ENCODE measurements at regions of chr20 and their contacts with region 1.

Region 1: GRCh38 chr20:3825526-3825925 is 5.2 kb downstream of the AP5S1 start:
- DNase-seq: no peak
- H3K4me3 ChIP-seq: no peak overlapping the region
- H3K27ac ChIP-seq: no peak overlapping the region
- H3K4me1 ChIP-seq: peaks cover 0 to 8% of the 10 kb centered on the region in 2 donors
- H3K27me3 ChIP-seq: no peaks in the 10 kb centered on the region
- CTCF ChIP-seq: no peak
- POLR2A ChIP-seq: no peak

Region 2: DNA sequence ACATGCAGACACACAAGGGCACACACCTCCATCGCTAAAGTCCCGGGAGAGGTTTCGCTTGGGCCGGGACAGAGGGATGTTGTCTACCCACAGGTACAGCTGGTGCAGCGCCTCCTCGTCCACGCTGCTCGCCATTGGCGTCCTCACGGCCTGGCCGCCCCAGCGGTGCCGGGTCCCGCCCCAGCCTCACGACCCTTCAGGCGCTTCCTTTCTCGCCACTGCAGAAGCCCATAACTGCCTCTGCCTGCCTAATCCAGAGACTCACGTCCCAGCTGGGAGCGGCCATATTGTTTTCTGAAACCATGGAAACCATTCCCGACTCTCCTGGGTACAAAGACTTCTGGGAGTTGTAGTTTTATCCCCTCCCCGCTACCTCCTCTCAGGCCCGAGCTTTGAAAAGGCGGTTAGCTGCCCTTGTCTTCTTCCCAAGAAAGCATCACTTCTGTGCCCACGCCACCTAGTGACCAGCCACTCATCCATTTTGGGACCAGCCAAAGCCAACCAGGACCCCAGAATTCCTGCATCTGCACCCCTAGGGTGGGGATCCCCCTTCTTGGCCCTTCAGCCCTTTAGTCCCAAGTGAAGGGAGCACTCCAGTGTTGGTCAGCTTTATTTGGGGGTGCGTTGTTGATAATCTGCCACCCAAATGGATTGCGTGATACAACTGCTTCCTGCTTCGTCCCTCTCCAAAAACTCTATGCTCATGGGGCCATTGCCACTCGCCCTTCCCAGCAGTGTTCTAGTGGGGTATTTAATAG is 44.2 kb before region 1 on chr20 and contains the start of gene SPEF1:
- intact Hi-C with region 1: loop called in 1 of 2 experiments (anchors 5 kb)
- DNase-seq: peak; percentile 86 to 95 (median 92)
- H3K4me3 ChIP-seq: peak within 1 kb of the TSS in 1 of 4 donors; percentile 54
- H3K27ac ChIP-seq: peak within 1 kb of the TSS in 2 of 5 donors; percentile 18 to 42
- H3K4me1 ChIP-seq: peaks cover 27 to 46% of the 10 kb centered on the region in 2 donors
- H3K27me3 ChIP-seq: no peaks in the 10 kb centered on the region
- CTCF ChIP-seq: peak; percentile 19 to 65 (median 58)
- POLR2A ChIP-seq: no peak
- total RNA-seq, gene SPEF1: 0.14 to 1.4 (median 0.32) TPM in 8 of 9 donors, not detected in the other

Region 3: DNA sequence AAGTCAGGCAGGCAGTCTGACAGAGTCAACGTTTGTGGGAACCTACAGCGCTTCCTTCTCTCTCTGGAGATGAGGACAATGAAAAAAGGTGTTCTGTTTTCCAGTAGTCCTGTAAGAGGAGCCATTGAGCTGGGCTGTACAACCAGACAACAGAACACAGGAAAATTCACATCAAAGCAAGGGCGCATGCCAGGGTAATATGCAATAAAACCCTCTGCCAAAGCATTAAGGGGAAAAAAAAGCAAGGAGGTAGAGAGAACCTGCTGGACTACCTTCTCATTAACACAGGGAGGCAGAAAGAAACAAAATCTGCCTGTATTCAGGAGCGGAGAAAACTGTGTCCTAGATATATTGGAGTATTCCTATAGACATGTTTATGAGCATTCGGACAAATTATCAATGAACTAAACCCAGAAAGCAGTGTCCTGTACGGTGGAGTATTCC is 188.5 kb after region 1 on chr20:
- intact Hi-C with region 1: no loop called
- DNase-seq: peak; percentile 50 to 79 (median 67)
- H3K4me3 ChIP-seq: peak overlapping the region in 1 of 4 donors; percentile 99
- H3K27ac ChIP-seq: peak overlapping the region in 3 of 5 donors; percentile 11 to 92 (median 58)
- H3K4me1 ChIP-seq: peaks cover 0 to 27% of the 10 kb centered on the region in 2 donors
- H3K27me3 ChIP-seq: no peaks in the 10 kb centered on the region
- CTCF ChIP-seq: peak; percentile 27 to 65 (median 56)
- POLR2A ChIP-seq: no peak

Measured in adrenal gland (tissue), 19 donors.